ENCODE measurements at regions of chr20 and their contacts with region 1.

Region 1: DNA sequence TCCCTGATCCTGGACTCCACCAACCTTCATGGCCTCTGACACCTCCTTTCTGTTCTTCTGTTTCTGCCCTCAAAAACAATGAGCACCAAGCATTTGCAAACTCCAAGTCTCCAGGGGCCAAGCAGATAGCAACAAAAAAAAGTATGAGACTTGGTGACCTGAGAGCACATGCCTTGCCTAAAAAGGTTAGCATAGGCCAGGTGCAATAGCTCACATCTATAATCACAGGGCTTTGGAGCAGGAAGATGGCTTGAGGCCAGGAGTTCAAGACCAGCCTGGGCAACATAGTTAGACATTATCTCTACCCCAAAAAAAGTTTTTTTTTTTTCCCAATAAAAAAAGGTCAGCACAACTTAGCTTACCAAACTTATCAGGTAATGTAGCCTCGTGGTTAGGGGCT is 13.7 kb upstream of the HM13 start:
- DNase-seq: no peak
- H3K4me3 ChIP-seq: no peak overlapping the region
- CTCF ChIP-seq: no peak

Region 2: DNA sequence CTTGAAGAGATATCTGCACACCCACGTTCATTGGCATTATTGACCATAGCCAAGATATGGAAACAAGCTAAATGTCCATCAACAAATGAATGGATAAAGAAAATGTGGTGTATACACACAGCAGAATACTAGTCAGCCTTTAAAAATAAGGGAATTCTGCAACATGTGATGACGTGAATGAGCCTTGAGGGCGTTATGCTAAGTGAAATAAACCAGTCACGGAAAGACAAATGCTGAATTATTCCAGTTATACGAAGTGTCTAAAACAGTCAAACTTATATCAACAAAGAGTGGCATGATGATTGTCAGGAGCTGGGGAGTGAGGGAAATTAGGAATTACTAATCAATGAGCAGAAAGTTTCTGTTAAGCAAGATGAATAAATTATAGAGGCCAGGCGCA is 86.1 kb before region 1 on chr20:
- CTCF ChIA-PET with region 1: interaction called, 52 read pairs
- POLR2A ChIA-PET with region 1: no interaction called
- DNase-seq: no peak
- H3K4me3 ChIP-seq: no peak overlapping the region
- CTCF ChIP-seq: no peak

Region 3: GRCh38 chr20:31485450-31486339 is 14.8 kb before region 1 on chr20:
- CTCF ChIA-PET with region 1: interaction called, 78 read pairs
- POLR2A ChIA-PET with region 1: no interaction called
- DNase-seq: no peak
- H3K4me3 ChIP-seq: peak overlapping the region; percentile 30; the same call in 1 of the 2 replicates
- CTCF ChIP-seq: no peak

Measured in AG04449 (cell line).